Ascending aorta (tissue), 2 donors: ENCODE measurements at regions of chr6 and their contacts with region 1.

Region 1: GRCh38 chr6:124961777-124962611 is at the start of gene RNF217:
- DNase-seq: peak in 1 of 2 donors; percentile 84
- H3K4me3 ChIP-seq: peak within 1 kb of the TSS; percentile 87 to 90
- H3K27ac ChIP-seq: peak within 1 kb of the TSS; percentile 93 to 98
- H3K4me1 ChIP-seq: peaks cover 0 to 24% of the 10 kb centered on the region in 2 donors
- H3K27me3 ChIP-seq: no peaks in the 10 kb centered on the region
- CTCF ChIP-seq: peak in 1 of 3 experiments; percentile 15
- total RNA-seq, gene RNF217: 7.3 TPM

Region 2: DNA sequence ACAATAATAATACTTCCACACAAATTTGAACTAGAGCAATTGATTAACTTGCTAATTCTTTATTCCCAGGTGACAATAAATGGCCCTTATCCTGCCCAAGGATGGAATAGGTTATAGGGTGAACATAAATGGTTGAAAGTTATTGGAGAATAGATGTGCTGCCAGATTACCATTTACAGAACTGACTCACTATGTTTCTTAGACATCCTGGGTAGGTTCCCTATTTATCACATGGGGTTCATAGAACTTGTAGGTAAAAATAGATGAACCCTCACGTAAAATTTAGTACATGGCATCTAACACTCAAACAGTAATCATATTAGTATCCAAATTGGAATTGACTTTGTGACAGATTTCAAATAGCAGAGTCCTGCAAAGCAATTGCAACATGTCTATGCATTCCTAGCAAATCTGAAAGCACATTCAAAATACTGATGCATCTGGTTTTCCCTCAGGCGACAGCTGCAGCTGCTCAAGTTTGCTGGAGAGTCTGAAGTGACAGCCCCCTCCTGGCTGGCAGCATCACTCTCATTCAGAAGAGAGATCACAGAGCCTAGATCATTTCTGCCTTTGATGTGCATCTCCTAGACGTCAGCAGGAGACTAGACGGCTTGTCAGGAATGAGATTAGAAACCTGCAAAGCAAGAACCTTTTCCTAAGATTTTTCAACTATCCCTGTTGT is 80.0 kb before region 1 on chr6:
- intact Hi-C with region 1: loop called (anchors 5 kb)
- DNase-seq: no peak
- H3K4me3 ChIP-seq: no peak overlapping the region
- H3K27ac ChIP-seq: peak overlapping the region in 1 of 2 donors; percentile 9
- H3K4me1 ChIP-seq: peaks cover 0 to 10% of the 10 kb centered on the region in 2 donors
- H3K27me3 ChIP-seq: no peaks in the 10 kb centered on the region
- CTCF ChIP-seq: no peak

Region 3: DNA sequence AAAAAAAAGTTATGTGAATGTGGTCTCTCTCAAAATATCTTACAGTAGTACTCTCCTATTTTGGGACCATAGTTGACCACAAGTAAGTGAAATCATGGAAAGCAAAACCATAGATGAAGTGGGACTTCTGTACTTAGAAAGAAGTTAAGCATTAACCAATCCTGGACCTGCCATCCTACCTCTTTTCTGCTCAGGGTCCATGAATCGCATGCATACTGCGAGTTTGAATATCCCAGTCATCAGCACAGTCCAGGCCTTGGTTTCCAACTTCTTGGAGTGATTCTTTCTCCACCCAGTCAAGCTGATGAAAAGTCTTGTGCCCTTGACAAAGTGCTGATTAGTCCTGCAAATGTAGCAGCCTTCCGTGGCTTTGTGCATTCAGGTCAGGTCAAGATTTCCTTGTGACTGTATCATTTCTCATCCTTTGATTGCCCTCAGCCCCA is 46.3 kb after region 1 on chr6:
- intact Hi-C with region 1: loop called (anchors 2 kb)
- DNase-seq: no peak
- H3K4me3 ChIP-seq: no peak overlapping the region
- H3K27ac ChIP-seq: no peak overlapping the region
- H3K4me1 ChIP-seq: peaks cover 0 to 8% of the 10 kb centered on the region in 2 donors
- H3K27me3 ChIP-seq: no peaks in the 10 kb centered on the region
- CTCF ChIP-seq: no peak

Region 4: DNA sequence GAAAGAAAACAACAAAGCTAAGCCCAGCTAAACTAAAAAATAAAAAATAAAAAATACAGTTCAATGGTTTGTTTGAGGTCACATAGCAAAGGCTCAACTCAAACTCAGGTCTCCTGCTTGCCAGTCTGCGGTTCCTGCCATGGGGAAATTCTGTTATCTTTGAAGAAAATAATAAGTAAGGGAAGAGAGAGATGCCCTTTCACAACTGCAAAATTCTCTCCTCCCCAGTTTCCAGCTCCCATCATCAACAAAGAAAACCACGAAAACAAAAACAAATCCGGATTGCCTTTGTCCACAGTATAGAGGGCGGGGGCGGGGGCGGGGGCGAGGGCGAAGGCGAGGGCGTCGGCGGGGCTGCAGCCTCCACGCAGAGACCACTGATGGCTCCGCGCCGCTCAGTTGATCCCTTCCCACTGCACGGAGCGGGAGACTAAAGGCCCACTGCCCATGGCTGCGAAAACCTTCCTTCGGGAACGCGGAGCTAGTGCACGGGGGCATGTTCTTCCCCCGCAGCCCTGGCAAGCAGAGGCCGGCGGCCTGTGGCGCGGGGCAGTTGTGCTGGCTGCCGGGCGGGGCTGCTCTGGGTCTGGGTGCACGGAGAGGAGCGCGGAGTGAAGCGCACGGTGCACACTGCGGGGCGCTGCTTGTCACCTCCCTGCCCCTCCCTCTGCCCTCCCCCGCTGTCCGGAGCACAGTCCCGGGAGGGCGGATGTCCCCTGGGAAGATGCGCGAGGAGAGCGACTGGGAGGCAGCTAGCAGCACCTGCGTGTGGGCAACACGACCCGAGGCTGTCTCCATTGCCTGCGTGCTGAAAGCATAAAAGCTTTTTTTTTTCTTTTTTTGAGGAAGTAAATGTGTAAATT is 137.4 kb after region 1 on chr6:
- intact Hi-C with region 1: loop called (anchors 2 kb)
- DNase-seq: peak in 1 of 2 donors; percentile 76
- H3K4me3 ChIP-seq: peak overlapping the region; percentile 69 to 71
- H3K27ac ChIP-seq: peak overlapping the region; percentile 77 to 91
- H3K4me1 ChIP-seq: peaks cover 7 to 39% of the 10 kb centered on the region in 2 donors
- H3K27me3 ChIP-seq: no peaks in the 10 kb centered on the region
- CTCF ChIP-seq: peak in 1 of 3 experiments; percentile 16